Endothelial cell of umbilical vein (primary cell): ENCODE measurements at regions of chr12 and their contacts with region 1.

Region 1: GRCh38 chr12:133080368-133081158 is at the start of gene ZNF140:
- DNase-seq: peak; percentile 98
- H3K4me3 ChIP-seq: peak within 1 kb of the TSS; percentile 55 to 82 (median 57)
- H3K27ac ChIP-seq: peak within 1 kb of the TSS; percentile 92
- H3K4me1 ChIP-seq: peaks cover 6% of the 10 kb centered on the region
- H3K27me3 ChIP-seq: no peaks in the 10 kb centered on the region
- CTCF ChIP-seq: peak; percentile 11 to 42
- POLR2A ChIP-seq: peak; percentile 83
- total RNA-seq, gene ZNF140: 10.5 and 11.9 TPM in 2 replicates

Region 2: DNA sequence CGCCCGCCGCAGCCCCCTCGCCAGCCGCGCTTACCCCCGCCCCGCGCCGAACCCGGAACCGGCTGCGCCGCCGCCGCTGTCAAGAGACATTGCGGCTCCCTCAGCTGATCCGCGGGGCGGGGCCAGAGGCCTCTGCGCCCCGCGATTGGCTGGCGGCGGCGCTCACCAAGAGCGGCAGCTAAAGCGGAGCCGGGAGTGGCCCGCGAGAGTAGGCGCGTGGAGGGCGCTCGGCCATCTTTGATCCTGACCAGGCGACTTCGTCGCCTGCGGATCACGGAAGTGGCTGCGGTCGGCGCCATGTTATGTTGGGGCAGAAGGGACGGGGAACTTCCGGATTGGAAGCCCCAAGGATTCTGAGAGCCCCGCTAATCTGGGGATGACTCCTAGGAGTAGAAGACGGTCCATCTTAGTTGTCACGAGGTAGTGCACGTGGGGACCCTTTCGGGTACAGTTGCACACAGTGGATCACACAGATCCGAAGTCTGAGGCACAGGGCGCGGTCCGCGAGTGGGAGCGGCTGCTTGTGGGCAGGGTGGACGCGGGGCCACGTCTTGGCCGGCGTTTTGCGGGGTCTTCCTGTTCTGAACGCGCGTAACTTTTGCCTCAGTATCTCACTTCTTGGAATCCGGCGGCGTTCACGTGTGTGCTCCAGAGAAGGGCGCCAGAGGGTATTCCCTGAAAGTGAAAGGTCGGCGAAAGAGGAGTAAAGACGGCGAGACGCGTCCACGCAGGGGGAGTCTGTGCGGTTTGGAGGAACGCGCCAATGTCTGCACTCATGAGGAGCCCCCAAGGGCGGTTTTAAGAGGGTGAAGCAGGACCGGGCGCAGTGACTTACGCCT is 192.8 kb before region 1 on chr12 and contains the start of gene CHFR:
- CTCF ChIA-PET with region 1: no interaction called
- POLR2A ChIA-PET with region 1: no interaction called
- dilution Hi-C with region 1: no loop called
- intact Hi-C with region 1: loop called (anchors 1 kb)
- DNase-seq: peak; percentile 97
- H3K4me3 ChIP-seq: peak within 1 kb of the TSS; percentile 52 to 90 (median 67)
- H3K27ac ChIP-seq: peak within 1 kb of the TSS; percentile 69
- H3K4me1 ChIP-seq: no peaks in the 10 kb centered on the region
- H3K27me3 ChIP-seq: no peaks in the 10 kb centered on the region
- CTCF ChIP-seq: no peak
- POLR2A ChIP-seq: peak; percentile 65
- total RNA-seq, gene CHFR: 64.7 and 66.5 TPM in 2 replicates

Region 3: DNA sequence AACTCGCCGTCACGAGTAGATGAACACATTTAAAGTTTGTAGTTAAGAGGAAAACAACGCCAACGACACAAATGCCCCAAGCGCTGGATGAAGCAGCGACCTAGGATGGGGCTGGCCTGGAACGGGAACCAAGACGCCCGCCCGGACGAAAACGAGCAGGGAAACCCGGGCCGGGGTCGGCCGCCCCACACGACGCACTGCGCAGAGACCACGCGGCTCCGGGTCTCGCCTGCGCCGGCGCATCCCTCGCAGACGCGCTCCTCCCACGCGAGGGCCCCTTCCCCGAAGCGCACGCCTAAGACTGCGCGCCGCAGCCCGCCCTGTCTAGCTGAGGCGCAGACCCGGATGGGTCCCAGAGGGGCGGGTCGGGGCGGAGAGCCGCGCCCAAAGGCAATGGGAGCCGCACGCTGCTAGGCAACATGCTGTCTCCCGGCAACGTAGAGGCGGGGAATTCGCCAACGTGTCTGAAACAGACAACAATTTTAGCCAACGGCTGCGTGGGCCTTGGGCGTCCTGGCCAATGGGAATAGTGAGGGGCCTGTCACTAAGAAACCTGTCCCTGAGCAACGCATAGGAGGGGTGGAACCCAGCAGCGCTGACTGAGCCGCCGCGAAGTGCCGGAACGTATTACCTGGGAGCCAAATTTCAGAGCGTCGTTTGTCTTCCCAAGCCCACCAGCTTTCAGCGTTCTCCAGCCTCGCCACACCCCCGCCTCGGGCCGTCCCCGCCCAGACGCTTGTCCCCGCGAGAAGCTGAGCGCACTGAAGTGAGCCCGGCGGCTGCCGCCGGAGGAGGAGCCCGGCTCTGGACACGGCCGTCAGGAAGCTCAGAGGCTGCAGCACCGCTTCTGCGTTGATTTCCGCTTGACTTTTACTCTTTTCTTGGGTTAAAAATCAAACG is 172.2 kb before region 1 on chr12:
- CTCF ChIA-PET with region 1: no interaction called
- POLR2A ChIA-PET with region 1: no interaction called
- dilution Hi-C with region 1: no loop called
- intact Hi-C with region 1: loop called (anchors 5 kb)
- DNase-seq: peak; percentile 97
- H3K4me3 ChIP-seq: peak overlapping the region; percentile 7 to 51 (median 47)
- H3K27ac ChIP-seq: no peak overlapping the region
- H3K4me1 ChIP-seq: peaks cover 2% of the 10 kb centered on the region
- H3K27me3 ChIP-seq: peaks cover 3 to 17% of the 10 kb centered on the region in 2 experiments
- CTCF ChIP-seq: no peak
- POLR2A ChIP-seq: no peak

Region 4: DNA sequence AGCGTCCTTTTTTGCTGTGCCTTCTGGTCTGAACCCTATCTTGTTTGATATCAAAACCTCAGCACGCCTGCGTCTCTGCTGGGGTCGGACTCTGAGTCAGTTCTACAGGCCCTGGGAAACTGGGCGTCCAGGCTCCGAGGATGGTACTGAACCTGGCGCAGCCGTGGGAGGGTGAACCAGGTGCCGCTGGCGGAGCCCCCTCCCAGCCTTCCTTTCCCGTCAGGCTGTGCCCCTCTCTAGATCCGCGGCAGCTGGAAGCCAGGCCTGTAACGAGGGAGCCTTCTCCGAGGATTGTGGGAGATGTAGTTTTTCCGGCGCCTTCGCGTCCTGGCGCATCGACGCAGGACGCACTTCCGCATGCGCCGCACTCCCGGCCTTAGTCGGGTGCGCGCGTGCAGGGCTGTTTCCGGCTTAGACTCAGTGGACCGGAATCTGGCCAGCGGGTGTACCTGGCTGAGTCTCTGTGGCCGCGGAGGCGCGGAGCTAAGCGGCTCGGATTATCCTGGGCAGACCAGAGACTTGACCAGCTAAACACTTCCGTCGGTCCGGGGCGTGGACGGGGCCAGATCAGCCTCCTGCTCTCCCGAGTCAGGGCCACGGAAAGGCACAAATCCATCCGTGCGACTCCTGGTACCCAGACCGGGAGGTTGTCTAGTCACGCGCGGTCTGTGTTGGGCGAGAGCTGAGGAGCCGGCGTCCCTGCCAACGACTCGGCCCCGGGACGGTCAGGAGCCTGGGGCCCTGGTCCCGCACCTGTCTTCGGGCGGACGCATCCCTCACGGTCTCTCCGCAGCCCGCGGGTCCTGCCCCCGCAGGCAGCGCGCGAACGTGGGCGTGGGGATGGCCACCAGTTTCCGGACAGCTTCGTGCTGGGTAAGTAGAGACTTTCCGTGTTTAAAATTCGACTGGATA is 94.3 kb before region 1 on chr12 and contains the start of gene ZNF26:
- CTCF ChIA-PET with region 1: no interaction called
- POLR2A ChIA-PET with region 1: no interaction called
- dilution Hi-C with region 1: no loop called
- intact Hi-C with region 1: loop called (anchors 1 kb)
- DNase-seq: peak; percentile 94
- H3K4me3 ChIP-seq: peak within 1 kb of the TSS; percentile 16 to 91 (median 61)
- H3K27ac ChIP-seq: peak within 1 kb of the TSS; percentile 59
- H3K4me1 ChIP-seq: peaks cover 11% of the 10 kb centered on the region
- H3K27me3 ChIP-seq: no peaks in the 10 kb centered on the region
- CTCF ChIP-seq: no peak
- POLR2A ChIP-seq: peak; percentile 74
- total RNA-seq, gene ZNF26: 9.7 and 11.1 TPM in 2 replicates

Region 5: GRCh38 chr12:133037207-133038005 is 43.2 kb before region 1 on chr12 and contains the start of gene ZNF84:
- CTCF ChIA-PET with region 1: no interaction called
- POLR2A ChIA-PET with region 1: no interaction called
- dilution Hi-C with region 1: no loop called
- intact Hi-C with region 1: loop called (anchors 1 kb)
- DNase-seq: peak; percentile 99
- H3K4me3 ChIP-seq: peak within 1 kb of the TSS; percentile 42 to 90 (median 78)
- H3K27ac ChIP-seq: peak within 1 kb of the TSS; percentile 59
- H3K4me1 ChIP-seq: no peaks in the 10 kb centered on the region
- H3K27me3 ChIP-seq: no peaks in the 10 kb centered on the region
- CTCF ChIP-seq: no peak
- POLR2A ChIP-seq: peak; percentile 83
- total RNA-seq, gene ZNF84: 26.0 TPM in 2 replicates

Region 6: GRCh38 chr12:133130038-133130807 is 49.7 kb after region 1 on chr12 and contains the starts of genes ZNF10 and ZNF891:
- CTCF ChIA-PET with region 1: interaction called, 4 read pairs
- POLR2A ChIA-PET with region 1: interaction called, 11 read pairs
- dilution Hi-C with region 1: no loop called
- intact Hi-C with region 1: loop called (anchors 1 kb)
- DNase-seq: peak; percentile 99
- H3K4me3 ChIP-seq: peak within 1 kb of the TSS; percentile 62 to 88 (median 87)
- H3K27ac ChIP-seq: peak within 1 kb of the TSS; percentile 86
- H3K4me1 ChIP-seq: no peaks in the 10 kb centered on the region
- H3K27me3 ChIP-seq: no peaks in the 10 kb centered on the region
- CTCF ChIP-seq: no peak
- POLR2A ChIP-seq: peak; percentile 79
- total RNA-seq, gene ZNF10: 4.4 and 5.8 TPM in 2 replicates
- total RNA-seq, gene ZNF891: 1.2 and 1.5 TPM in 2 replicates

Region 7: DNA sequence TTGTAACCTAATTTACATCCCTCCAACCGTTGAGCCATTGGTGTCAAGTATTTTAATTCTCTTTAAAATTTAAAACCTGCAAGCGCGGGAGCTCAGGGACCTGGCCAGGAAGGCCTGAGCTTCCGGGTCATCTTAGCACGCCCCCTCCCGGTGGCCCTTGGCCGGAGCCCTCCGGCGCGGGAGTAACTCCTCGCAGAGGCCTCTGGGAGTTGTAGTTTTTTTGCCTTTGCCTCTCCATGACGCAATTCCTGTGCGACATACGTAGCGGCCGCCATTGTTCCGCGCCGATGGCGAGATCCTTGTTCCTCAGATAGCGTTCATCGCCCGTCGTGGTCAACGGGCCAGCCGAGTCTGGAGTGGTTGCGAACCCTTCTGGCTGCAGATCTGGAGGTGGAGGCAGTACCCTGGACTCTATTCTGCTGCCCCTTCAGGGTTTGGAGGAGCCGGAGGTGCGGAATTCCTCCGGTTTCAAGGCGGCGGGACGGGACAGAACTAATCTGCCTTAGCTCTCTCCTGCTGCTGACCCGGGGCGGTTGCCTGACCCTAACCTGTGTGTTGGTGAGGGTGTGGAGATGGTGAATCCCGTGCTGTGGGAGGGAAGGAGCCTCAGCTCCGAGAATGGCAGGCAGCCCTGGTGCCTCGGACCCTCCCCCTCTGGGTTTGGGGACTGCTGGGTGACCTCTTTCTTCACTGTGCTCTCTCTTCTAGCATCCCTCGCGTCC is 100.8 kb after region 1 on chr12 and contains the start of gene ZNF268:
- CTCF ChIA-PET with region 1: interaction called, 9 read pairs
- POLR2A ChIA-PET with region 1: interaction called, 3 read pairs
- dilution Hi-C with region 1: no loop called
- intact Hi-C with region 1: loop called (anchors 1 kb)
- DNase-seq: peak; percentile 91
- H3K4me3 ChIP-seq: peak within 1 kb of the TSS; percentile 27 to 88 (median 68)
- H3K27ac ChIP-seq: peak within 1 kb of the TSS; percentile 31
- H3K4me1 ChIP-seq: peaks cover 3% of the 10 kb centered on the region
- H3K27me3 ChIP-seq: no peaks in the 10 kb centered on the region
- CTCF ChIP-seq: peak; percentile 83 to 88
- POLR2A ChIP-seq: peak; percentile 77
- total RNA-seq, gene ZNF268: 17.3 and 18.2 TPM in 2 replicates